HCT116 (cell line): ENCODE measurements at regions of chr19 and their contacts with region 1.

Region 1: DNA sequence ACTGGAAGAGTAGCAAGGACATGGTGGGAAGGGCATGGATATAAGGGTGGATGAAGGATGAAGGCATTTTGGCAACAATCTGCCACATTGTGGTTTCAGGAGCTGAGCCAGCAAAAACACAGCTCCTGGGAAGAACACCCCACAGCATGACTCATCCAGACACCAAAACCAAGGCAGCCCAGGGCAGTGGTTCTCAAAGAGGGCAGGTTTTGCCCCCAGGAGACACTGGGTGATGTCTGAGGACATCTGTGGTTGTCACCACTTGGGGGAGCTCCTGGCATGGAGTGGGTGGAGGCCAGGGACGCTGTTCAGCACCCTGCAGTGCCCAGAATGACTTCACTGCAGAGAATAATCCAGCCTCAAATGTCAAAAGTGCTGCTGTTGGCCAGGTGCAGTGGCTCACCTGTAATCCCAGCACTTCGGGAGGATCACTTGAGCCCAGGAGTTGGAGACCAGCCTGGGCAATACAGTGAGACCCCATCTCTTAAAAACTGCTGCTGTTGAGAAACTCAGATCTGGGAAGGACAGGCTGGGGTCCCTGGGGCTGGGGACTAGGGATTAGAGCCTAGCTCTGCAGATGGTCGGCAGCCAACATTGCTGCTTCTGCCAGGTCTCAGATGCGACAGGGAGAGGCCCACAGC is 16.1 kb downstream of the ZFR2 start:
- DNase-seq: peak; percentile 79
- ATAC-seq: peak; percentile 85
- H3K4me3 ChIP-seq: no peak overlapping the region
- H3K27ac ChIP-seq: peak overlapping the region; percentile 38; the same call in 1 of the 2 replicates
- H3K4me1 ChIP-seq: peaks cover 21 to 39% of the 10 kb centered on the region in 2 experiments
- H3K27me3 ChIP-seq: no peaks in the 10 kb centered on the region
- CTCF ChIP-seq: peak; percentile 77 to 86 (median 78); a peak in 5 of 6 replicates
- POLR2A ChIP-seq: no peak
- RAD21 ChIP-seq: peak; percentile 97

Region 2: DNA sequence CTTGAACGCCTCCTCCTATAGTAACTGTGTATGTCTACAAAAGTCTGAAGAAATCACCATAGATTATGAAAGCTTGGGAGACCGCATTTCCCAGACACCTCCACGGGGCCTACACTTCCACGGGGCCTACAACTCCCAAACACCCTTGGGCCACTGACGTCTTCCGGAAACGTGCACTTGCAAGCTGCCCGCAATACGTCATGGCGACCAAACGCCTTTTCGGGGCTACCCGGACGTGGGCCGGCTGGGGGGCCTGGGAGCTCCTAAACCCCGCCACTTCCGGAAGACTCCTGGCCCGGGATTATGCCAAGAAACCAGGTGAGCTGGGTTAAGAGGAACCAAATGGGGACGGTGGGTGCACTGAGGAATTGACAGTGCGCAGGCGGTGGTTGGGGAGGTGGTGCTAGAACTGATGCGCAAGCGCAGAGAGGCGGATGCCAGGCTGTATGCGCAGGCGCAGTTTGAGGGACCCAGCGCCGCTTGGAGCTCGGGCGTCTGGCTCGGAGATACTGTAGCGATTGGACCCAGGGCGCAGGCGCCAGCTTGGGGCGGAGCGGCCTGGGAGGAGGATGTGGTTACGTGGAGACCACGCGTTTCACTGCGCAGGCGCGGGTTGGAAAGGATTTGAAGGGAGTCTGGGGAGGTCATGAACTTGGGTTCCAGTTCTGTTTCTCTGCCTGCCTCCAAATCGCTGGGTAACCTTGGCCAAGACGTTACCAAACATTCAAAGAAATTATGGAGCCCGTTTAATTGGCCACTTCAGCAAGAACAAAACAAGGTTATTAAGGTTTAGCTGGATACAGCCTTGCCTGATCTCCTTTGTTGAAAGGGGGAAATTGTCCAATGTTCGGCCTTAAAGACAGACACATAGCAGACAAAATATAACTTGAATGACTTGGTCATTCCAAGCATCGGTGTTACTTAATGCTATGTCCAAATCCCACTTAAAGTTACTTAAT is 90.0 kb before region 1 on chr19 and contains the start of gene MRPL54:
- CTCF ChIA-PET with region 1: interaction called, 16 read pairs
- POLR2A ChIA-PET with region 1: interaction called, 6 read pairs
- RAD21 ChIA-PET with region 1: interaction called, 3 read pairs
- intact Hi-C with region 1: no loop called
- DNase-seq: peak; percentile 98
- ATAC-seq: peak; percentile 88
- H3K4me3 ChIP-seq: peak within 1 kb of the TSS; percentile 77 to 99
- H3K27ac ChIP-seq: peak within 1 kb of the TSS; percentile 93
- H3K4me1 ChIP-seq: peaks cover 6 to 14% of the 10 kb centered on the region in 2 experiments; a peak in 2 of 4 replicates
- H3K27me3 ChIP-seq: no peaks in the 10 kb centered on the region
- CTCF ChIP-seq: no peak
- POLR2A ChIP-seq: peak; percentile 67
- RAD21 ChIP-seq: no peak
- total RNA-seq, gene MRPL54: 67.1 TPM

Region 3: GRCh38 chr19:3839941-3840340 is 12.8 kb before region 1 on chr19:
- CTCF ChIA-PET with region 1: interaction called, 11 read pairs
- POLR2A ChIA-PET with region 1: no interaction called
- RAD21 ChIA-PET with region 1: no interaction called
- intact Hi-C with region 1: no loop called
- DNase-seq: no peak
- ATAC-seq: no peak
- H3K4me3 ChIP-seq: no peak overlapping the region
- H3K27ac ChIP-seq: no peak overlapping the region
- H3K4me1 ChIP-seq: peaks cover 0 to 6% of the 10 kb centered on the region in 2 experiments; a peak in 1 of 4 replicates
- H3K27me3 ChIP-seq: no peaks in the 10 kb centered on the region
- CTCF ChIP-seq: no peak
- POLR2A ChIP-seq: no peak
- RAD21 ChIP-seq: no peak

Region 4: GRCh38 chr19:3984908-3985642 is 132.3 kb after region 1 on chr19 and contains the start of gene EEF2:
- CTCF ChIA-PET with region 1: interaction called, 27 read pairs
- POLR2A ChIA-PET with region 1: interaction called, 13 read pairs
- RAD21 ChIA-PET with region 1: interaction called, 3 to 5 read pairs
- intact Hi-C with region 1: loop called (anchors 5 kb)
- DNase-seq: peak; percentile 68
- ATAC-seq: peak; percentile 26
- H3K4me3 ChIP-seq: peak within 1 kb of the TSS; percentile 95
- H3K27ac ChIP-seq: peak within 1 kb of the TSS; percentile 98
- H3K4me1 ChIP-seq: peaks cover 22 to 47% of the 10 kb centered on the region in 2 experiments
- H3K27me3 ChIP-seq: no peaks in the 10 kb centered on the region
- CTCF ChIP-seq: no peak
- POLR2A ChIP-seq: peak; percentile 99
- RAD21 ChIP-seq: no peak
- total RNA-seq, gene EEF2: 3,796 TPM

Region 5: DNA sequence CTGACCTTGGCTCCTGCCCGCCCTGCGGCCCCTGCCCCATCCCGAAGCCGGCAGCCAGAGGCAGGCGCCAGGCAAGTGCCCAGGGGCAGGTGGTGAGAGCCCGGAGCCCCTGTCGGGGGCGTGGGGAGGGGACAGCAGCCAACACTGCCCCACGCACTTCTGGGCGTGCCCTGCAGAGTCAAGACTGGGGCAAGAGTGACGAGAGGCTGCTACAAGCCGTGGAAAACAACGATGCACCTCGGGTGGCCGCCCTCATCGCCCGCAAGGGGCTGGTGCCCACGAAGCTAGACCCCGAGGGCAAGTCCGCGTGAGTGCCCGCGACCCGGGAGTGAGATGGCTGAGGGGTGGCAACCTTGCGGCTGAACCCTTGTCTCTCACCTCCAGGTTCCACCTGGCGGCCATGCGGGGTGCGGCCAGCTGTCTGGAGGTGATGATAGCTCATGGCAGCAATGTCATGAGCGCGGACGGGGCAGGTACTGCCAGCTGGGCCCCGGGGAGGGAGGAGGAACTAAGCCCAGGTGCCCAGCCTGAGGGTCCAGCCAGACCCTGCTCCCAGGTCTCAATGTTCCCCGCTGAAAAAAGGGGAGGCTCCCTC is 347.1 kb after region 1 on chr19:
- CTCF ChIA-PET with region 1: interaction called, 10 read pairs
- POLR2A ChIA-PET with region 1: no interaction called
- RAD21 ChIA-PET with region 1: no interaction called
- intact Hi-C with region 1: no loop called
- DNase-seq: no peak
- ATAC-seq: peak; percentile 87
- H3K4me3 ChIP-seq: peak overlapping the region; percentile 31 to 51
- H3K27ac ChIP-seq: no peak overlapping the region; the same call in 1 of the 2 replicates
- H3K4me1 ChIP-seq: peaks cover 7 to 22% of the 10 kb centered on the region in 2 experiments; a peak in 3 of 4 replicates
- H3K27me3 ChIP-seq: peaks cover 3% of the 10 kb centered on the region; the same call in 1 of the 2 replicates
- CTCF ChIP-seq: peak; percentile 59 to 74 (median 70)
- POLR2A ChIP-seq: no peak
- RAD21 ChIP-seq: peak; percentile 69